SK-N-SH (cell line): ENCODE measurements at regions of chr11 and their contacts with region 1.

Region 1: DNA sequence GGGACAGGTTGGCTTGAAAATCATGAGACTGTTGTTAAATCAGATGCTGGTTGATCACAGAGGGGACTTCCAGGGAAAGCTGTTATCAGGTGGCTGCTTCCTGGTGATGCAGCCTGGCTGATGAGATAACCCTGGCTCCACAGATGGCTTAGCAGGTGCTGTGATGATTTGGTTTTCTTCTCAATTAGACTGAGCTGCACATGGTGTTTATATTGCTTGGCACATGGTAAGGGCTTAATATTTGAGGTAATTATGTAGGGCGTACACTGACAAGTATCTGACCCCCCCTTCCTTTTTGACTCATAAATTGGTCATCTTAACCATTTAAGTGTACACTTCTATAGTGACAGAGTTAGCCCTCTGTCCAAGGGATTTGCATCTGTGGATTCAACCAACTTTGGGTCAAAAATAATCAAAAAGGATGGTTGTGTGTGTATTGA is 7.0 kb downstream of the RPS3 start:
- DNase-seq: peak; percentile 61
- H3K4me3 ChIP-seq: no peak overlapping the region
- H3K27ac ChIP-seq: peak overlapping the region; percentile 3 to 74; a peak in 3 of 4 replicates
- H3K4me1 ChIP-seq: peaks cover 22 to 43% of the 10 kb centered on the region in 2 experiments
- H3K27me3 ChIP-seq: no peaks in the 10 kb centered on the region
- CTCF ChIP-seq: no peak
- EP300 ChIP-seq: peak in 1 of 2 experiments; percentile 57; a peak in 1 of 4 replicates
- RAD21 ChIP-seq: no peak

Region 2: DNA sequence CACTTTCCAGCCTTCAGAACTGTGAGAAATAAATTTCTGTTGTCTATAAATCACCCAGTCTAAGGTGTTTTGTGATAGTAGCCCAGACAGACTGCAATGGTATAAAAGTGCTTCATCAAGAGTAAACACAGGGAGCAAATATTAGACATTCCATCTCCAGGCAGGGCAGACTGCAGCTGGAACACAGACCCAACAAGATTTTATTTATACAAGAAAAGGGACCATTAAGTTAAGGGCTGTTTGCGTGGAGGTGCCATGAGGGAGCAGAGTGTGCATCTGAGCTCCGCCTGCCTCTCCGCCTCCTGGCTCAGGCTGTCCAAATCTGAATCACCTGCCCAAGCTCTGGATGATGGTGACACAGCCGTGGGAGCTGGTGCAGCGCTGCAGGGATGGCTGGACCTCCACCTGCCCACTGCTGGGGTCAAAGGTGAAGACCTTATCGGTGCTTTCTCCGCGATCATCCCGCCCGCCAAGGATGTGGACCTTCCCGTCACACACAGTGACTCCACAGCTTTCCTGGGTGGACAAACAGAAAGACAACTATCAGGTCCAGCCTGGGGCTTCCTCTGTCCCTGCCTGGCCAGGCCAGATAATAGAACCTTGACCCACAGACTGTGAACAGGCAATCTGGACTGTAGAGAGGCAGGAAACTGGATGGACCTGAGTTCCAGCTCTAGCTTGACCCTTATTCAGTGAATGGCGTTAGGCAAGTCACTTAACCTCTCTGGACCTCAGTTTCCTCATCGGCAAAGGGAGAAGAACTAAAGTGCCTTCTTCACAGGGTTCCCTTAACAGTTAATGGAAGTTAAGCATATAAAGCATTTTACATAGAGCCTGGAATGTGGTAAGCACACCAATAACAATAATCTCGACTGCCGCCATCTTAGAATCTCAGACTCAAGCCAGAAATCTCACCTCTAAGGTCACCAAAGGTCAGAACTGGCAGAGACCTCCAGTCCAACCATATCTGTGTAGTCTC is 16.2 kb after region 1 on chr11:
- CTCF ChIA-PET with region 1: interaction called, 27 read pairs
- POLR2A ChIA-PET with region 1: interaction called, 4 read pairs
- DNase-seq: no peak
- H3K4me3 ChIP-seq: no peak overlapping the region
- H3K27ac ChIP-seq: no peak overlapping the region
- H3K4me1 ChIP-seq: peaks cover 11 to 22% of the 10 kb centered on the region in 2 experiments; a peak in 2 of 4 replicates
- H3K27me3 ChIP-seq: no peaks in the 10 kb centered on the region
- CTCF ChIP-seq: no peak
- EP300 ChIP-seq: no peak
- RAD21 ChIP-seq: no peak

Region 3: GRCh38 chr11:75428281-75428724 is 21.9 kb after region 1 on chr11:
- CTCF ChIA-PET with region 1: interaction called, 16 read pairs
- POLR2A ChIA-PET with region 1: interaction called, 5 read pairs
- DNase-seq: peak; percentile 99
- H3K4me3 ChIP-seq: peak overlapping the region; percentile 54 to 55; a peak in 3 of 4 replicates
- H3K27ac ChIP-seq: peak overlapping the region in 1 of 2 experiments; percentile 53; a peak in 1 of 4 replicates
- H3K4me1 ChIP-seq: peaks cover 0 to 21% of the 10 kb centered on the region in 2 experiments; a peak in 1 of 4 replicates
- H3K27me3 ChIP-seq: peaks cover 9% of the 10 kb centered on the region
- CTCF ChIP-seq: no peak
- EP300 ChIP-seq: no peak
- RAD21 ChIP-seq: no peak

Region 4: GRCh38 chr11:75478783-75479596 is 72.6 kb after region 1 on chr11:
- CTCF ChIA-PET with region 1: no interaction called
- POLR2A ChIA-PET with region 1: no interaction called
- DNase-seq: no peak
- H3K4me3 ChIP-seq: no peak overlapping the region
- H3K27ac ChIP-seq: no peak overlapping the region
- H3K4me1 ChIP-seq: peaks cover 10 to 14% of the 10 kb centered on the region in 2 experiments; a peak in 3 of 4 replicates
- H3K27me3 ChIP-seq: no peaks in the 10 kb centered on the region
- CTCF ChIP-seq: no peak
- EP300 ChIP-seq: no peak
- RAD21 ChIP-seq: no peak